HEK293 (cell line): ENCODE measurements at regions of chr5 and their contacts with region 1.

Region 1: GRCh38 chr5:73596705-73597328 is 29.2 kb upstream of the ARHGEF28 start:
- H3K4me3 ChIP-seq: no peak overlapping the region
- H3K27ac ChIP-seq: no peak overlapping the region
- H3K4me1 ChIP-seq: 0 out of 2 replicates have a peak, but pooled peaks cover 2% of the 10 kb centered on the region
- CTCF ChIP-seq: no peak

Region 2: GRCh38 chr5:73693481-73694061 is 96.8 kb after region 1 on chr5:
- CTCF ChIA-PET with region 1: interaction called, 17 read pairs
- POLR2A ChIA-PET with region 1: no interaction called
- H3K4me3 ChIP-seq: no peak overlapping the region
- H3K27ac ChIP-seq: no peak overlapping the region
- H3K4me1 ChIP-seq: peaks cover 6% of the 10 kb centered on the region
- CTCF ChIP-seq: peak; percentile 37; the same call in 1 of the 2 replicates

Region 3: DNA sequence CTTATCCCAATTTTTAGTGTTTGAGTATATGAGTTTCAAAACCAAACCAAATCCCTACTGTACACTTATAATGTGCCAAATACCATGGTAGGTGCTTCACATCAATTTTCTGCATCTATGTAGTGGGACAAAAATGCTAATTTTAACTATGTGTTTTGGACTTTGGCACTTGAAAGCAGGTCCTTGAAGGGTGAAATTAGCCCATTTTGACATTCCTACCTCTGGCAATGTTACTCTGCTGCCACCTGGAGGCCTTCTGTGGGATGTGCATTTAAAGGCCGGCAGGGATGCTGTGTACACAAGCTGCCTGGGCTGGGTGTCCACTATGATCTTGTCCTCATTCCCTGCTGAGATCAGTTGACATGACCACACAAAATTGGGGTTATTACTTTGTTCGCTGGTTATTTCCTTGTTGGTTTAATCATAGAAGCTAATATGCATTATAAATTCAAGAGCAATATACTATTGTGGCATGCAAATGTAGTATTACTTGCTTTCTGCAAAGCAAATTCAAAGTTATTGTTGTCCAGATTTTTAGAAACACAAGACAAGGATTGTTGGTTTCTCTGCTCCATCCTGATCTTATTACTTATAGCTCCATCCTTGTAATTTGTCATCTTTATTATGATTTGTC is 196.0 kb after region 1 on chr5:
- CTCF ChIA-PET with region 1: interaction called, 258 read pairs
- POLR2A ChIA-PET with region 1: no interaction called
- H3K4me3 ChIP-seq: no peak overlapping the region
- H3K27ac ChIP-seq: no peak overlapping the region
- H3K4me1 ChIP-seq: peaks cover 19% of the 10 kb centered on the region
- CTCF ChIP-seq: peak; percentile 83